ENCODE measurements at regions of chr2 and their contacts with region 1.

Region 1: GRCh38 chr2:29115797-29116781 is 874 bp downstream of the CLIP4 start:
- DNase-seq: peak; percentile 39 to 82 (median 75)
- ATAC-seq: peak; percentile 62
- H3K4me3 ChIP-seq: peak overlapping the region; percentile 75
- H3K4me3 Mint-ChIP-seq: peak overlapping the region; percentile 86 to 98 (median 88)
- H3K27ac ChIP-seq: peak overlapping the region; percentile 73
- H3K27ac Mint-ChIP-seq: peak overlapping the region; percentile 87 to 99 (median 97)
- H3K4me1 ChIP-seq: peaks cover 8 to 20% of the 10 kb centered on the region in 2 donors
- H3K4me1 Mint-ChIP-seq: peaks cover 23 to 61% (median 55%) of the 10 kb centered on the region in 7 donors
- H3K27me3 ChIP-seq: no peaks in the 10 kb centered on the region
- H3K27me3 Mint-ChIP-seq: peaks cover 0 to 12% (median 0%) of the 10 kb centered on the region in 5 donors

Region 2: GRCh38 chr2:28239207-28239606 is 876.9 kb before region 1 on chr2:
- CTCF ChIA-PET with region 1: no interaction called
- POLR2A ChIA-PET with region 1: no interaction called
- intact Hi-C with region 1: no loop called
- DNase-seq: no peak
- ATAC-seq: no peak
- H3K4me3 ChIP-seq: no peak overlapping the region
- H3K4me3 Mint-ChIP-seq: no peak overlapping the region
- H3K27ac ChIP-seq: no peak overlapping the region
- H3K27ac Mint-ChIP-seq: no peak overlapping the region
- H3K4me1 ChIP-seq: no peaks in the 10 kb centered on the region
- H3K4me1 Mint-ChIP-seq: peaks cover 0 to 8% (median 0%) of the 10 kb centered on the region in 7 donors
- H3K27me3 ChIP-seq: no peaks in the 10 kb centered on the region
- H3K27me3 Mint-ChIP-seq: no peaks in the 10 kb centered on the region

Region 3: DNA sequence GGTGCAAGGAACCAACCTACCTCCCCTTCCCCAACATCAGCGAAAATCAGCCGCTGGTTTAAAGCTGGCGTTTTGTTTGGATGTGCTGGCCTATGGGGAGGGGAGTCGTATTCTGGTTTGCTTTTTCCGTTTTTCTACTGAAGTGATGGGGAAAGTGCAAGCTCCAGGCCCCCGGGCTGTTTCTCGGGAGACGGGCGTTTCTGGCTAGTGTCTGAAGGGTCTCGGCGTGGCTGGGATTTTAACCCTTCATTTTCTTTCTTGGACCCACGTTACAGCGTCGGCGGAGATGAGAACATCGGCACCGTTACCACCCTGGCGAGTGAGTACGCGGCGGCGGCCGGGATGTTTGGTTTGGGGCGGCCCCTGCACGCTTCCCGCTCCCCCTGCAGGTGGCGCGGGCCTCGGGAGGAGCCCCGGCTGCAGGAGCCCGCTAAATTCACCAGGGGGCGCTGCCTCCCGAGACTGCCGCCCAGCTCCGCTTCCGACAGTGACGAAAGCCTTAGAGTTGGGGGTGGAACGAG is 549.5 kb before region 1 on chr2:
- CTCF ChIA-PET with region 1: no interaction called
- POLR2A ChIA-PET with region 1: no interaction called
- intact Hi-C with region 1: no loop called
- DNase-seq: peak; percentile 81 to 96 (median 90)
- ATAC-seq: peak; percentile 100
- H3K4me3 ChIP-seq: peak overlapping the region; percentile 74
- H3K4me3 Mint-ChIP-seq: peak overlapping the region; percentile 84 to 95 (median 92)
- H3K27ac ChIP-seq: peak overlapping the region; percentile 84
- H3K27ac Mint-ChIP-seq: peak overlapping the region; percentile 59 to 96 (median 92)
- H3K4me1 ChIP-seq: peaks cover 6 to 12% of the 10 kb centered on the region in 2 donors
- H3K4me1 Mint-ChIP-seq: peaks cover 6 to 24% (median 16%) of the 10 kb centered on the region in 7 donors
- H3K27me3 ChIP-seq: peaks cover 0 to 3% of the 10 kb centered on the region in 2 donors
- H3K27me3 Mint-ChIP-seq: peaks cover 0 to 6% (median 0%) of the 10 kb centered on the region in 5 donors

Region 4: DNA sequence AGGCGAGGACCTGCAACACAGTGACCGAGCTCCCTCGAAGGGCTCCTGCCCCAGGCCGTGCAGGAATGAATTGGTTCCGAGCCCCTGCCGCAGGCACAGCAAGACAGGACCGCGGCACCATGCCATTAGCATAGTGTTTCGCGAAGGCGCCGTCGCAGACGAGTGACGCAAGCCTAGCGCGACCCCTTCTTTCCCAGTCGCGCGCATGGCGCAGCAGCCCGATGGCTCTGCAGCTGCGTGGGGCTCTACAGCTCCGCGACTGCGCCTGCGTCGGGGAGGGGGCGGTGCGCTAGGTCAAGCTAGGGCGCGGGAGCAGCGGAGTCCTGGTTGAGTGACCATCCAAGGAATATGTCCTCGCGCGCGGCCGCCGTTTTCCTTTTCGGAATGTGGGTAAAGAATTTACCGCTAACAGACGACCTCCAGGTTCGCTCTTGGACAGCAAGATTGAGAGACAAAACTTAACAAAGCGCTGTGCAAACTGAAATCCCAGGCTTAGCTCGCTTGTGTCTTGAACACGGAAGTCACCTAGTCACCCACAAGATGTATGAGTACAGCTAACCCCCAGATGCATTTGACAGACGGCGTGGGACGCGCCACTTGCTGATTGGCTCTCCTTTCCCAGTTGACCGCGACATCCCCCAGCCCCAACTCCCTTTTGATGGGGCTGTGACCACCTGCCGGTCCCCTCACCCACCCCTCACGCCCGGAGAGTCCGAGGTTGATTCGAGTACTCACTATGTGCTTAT is 245.8 kb before region 1 on chr2 and contains the start of gene TRMT61B:
- CTCF ChIA-PET with region 1: no interaction called
- POLR2A ChIA-PET with region 1: interaction called, 16 read pairs
- intact Hi-C with region 1: loop called in 1 of 2 experiments (anchors 1 kb)
- DNase-seq: peak; percentile 94 to 97 (median 95)
- ATAC-seq: peak; percentile 98
- H3K4me3 ChIP-seq: peak within 1 kb of the TSS; percentile 96
- H3K4me3 Mint-ChIP-seq: peak within 1 kb of the TSS; percentile 90 to 98 (median 96)
- H3K27ac ChIP-seq: peak within 1 kb of the TSS; percentile 87
- H3K27ac Mint-ChIP-seq: peak within 1 kb of the TSS; percentile 95 to 100 (median 98)
- H3K4me1 ChIP-seq: peaks cover 19 to 22% of the 10 kb centered on the region in 2 donors
- H3K4me1 Mint-ChIP-seq: peaks cover 22 to 48% (median 37%) of the 10 kb centered on the region in 7 donors
- H3K27me3 ChIP-seq: no peaks in the 10 kb centered on the region
- H3K27me3 Mint-ChIP-seq: peaks cover 0 to 6% (median 2%) of the 10 kb centered on the region in 5 donors
- total RNA-seq, gene TRMT61B: 14.8 to 24.5 (median 20.5) TPM

Region 5: GRCh38 chr2:28958689-28959088 is 157.4 kb before region 1 on chr2:
- CTCF ChIA-PET with region 1: interaction called, 3 read pairs
- POLR2A ChIA-PET with region 1: interaction called, 5 read pairs
- intact Hi-C with region 1: loop called in 1 of 2 experiments (anchors 1 kb)
- DNase-seq: peak in 7 of 9 donors; percentile 32 to 63 (median 53)
- ATAC-seq: peak; percentile 80
- H3K4me3 ChIP-seq: no peak overlapping the region
- H3K4me3 Mint-ChIP-seq: no peak overlapping the region
- H3K27ac ChIP-seq: no peak overlapping the region
- H3K27ac Mint-ChIP-seq: peak overlapping the region in 1 of 9 donors; percentile 12
- H3K4me1 ChIP-seq: no peaks in the 10 kb centered on the region
- H3K4me1 Mint-ChIP-seq: peaks cover 0 to 18% (median 4%) of the 10 kb centered on the region in 7 donors
- H3K27me3 ChIP-seq: no peaks in the 10 kb centered on the region
- H3K27me3 Mint-ChIP-seq: peaks cover 0 to 13% (median 0%) of the 10 kb centered on the region in 5 donors

Region 6: DNA sequence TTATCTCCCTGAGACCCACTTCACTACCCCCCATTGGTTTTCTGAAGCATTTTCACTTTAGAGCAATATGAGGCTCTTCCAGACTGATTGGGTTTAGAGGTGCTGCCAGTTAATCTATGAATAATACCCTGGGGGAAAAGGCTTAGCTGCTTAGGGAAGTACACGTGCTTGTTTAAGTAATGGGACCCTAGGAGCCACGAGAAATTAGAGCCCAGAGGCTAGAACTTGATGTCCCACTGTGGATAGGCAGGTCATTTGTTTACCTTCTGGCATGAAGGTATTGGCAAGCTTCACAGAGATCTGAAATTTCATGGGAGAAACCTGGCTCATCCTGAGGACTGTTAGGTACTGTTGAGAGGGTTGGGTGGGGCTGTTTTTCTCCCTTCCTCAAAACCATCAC is 58.8 kb after region 1 on chr2:
- CTCF ChIA-PET with region 1: no interaction called
- POLR2A ChIA-PET with region 1: interaction called, 3 read pairs
- intact Hi-C with region 1: loop called in 1 of 2 experiments (anchors 5 kb)
- DNase-seq: no peak
- ATAC-seq: no peak
- H3K4me3 ChIP-seq: no peak overlapping the region
- H3K4me3 Mint-ChIP-seq: no peak overlapping the region
- H3K27ac ChIP-seq: no peak overlapping the region
- H3K27ac Mint-ChIP-seq: no peak overlapping the region
- H3K4me1 ChIP-seq: no peaks in the 10 kb centered on the region
- H3K4me1 Mint-ChIP-seq: peaks cover 0 to 9% (median 0%) of the 10 kb centered on the region in 7 donors
- H3K27me3 ChIP-seq: no peaks in the 10 kb centered on the region
- H3K27me3 Mint-ChIP-seq: no peaks in the 10 kb centered on the region